ENCODE measurements at regions of chr22 and their contacts with region 1.

Region 1: GRCh38 chr22:50326959-50327710 is at the start of gene DENND6B:
- DNase-seq: no peak
- ATAC-seq: peak; percentile 97
- H3K4me3 ChIP-seq: peak within 1 kb of the TSS; percentile 52 to 60
- H3K27ac ChIP-seq: peak within 1 kb of the TSS; percentile 85
- H3K4me1 ChIP-seq: peaks cover 4% of the 10 kb centered on the region
- H3K27me3 ChIP-seq: no peaks in the 10 kb centered on the region
- CTCF ChIP-seq: peak; percentile 93
- total RNA-seq, gene DENND6B: 5.8 TPM

Region 2: DNA sequence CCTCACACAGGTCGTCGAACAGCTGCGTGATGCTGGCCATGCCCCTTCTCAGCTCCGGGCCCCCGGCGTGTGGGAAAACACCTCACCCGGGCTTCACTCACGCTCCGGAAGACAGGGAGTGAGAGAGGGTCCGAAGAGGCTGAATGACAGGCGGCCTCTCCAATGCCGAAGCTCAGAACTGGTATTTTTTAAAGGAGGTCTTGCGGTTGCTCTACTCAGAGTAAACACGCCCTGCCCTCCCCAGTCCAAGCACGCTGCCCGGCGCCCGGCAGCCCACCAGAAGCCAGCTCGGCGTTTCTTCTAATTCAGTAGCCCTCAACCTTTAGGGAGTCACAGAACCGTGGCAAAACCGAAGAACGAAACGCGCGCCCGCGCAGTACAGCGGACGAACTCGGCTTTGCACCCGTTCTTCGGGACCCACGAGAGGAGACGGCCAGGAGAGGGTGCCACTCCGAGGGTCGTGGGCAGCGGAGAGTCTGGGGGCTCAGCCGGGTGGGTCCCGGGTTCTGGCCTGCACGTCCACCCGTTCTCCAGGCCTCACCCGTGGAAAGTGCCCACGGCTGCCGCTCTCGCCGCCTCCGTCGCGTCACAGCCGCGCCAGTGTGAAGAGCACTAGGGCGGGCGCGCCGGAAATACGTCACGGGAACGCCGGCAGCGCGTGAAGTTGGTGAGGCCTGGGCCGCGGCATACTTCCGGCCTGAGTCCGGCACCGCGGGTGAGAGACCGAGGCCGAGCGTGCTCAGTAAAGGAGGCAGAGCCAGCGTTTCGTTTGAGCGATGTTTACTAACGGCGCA is 82.5 kb before region 1 on chr22 and contains the start of gene TUBGCP6:
- CTCF ChIA-PET with region 1: interaction called, 14 read pairs
- POLR2A ChIA-PET with region 1: no interaction called
- in situ Hi-C with region 1: no loop called
- intact Hi-C with region 1: no loop called
- DNase-seq: no peak
- ATAC-seq: peak; percentile 87
- H3K4me3 ChIP-seq: peak within 1 kb of the TSS; percentile 78 to 79
- H3K27ac ChIP-seq: peak within 1 kb of the TSS; percentile 84
- H3K4me1 ChIP-seq: peaks cover 4% of the 10 kb centered on the region; the same call in 1 of the 2 replicates
- H3K27me3 ChIP-seq: no peaks in the 10 kb centered on the region
- CTCF ChIP-seq: no peak
- total RNA-seq, gene TUBGCP6: 31.3 TPM

Measured in Panc1 (cell line).